Right ventricle myocardium inferior (tissue), 1 donor: ENCODE measurements at regions of chr2 and their contacts with region 1.

Region 1: GRCh38 chr2:197191177-197191939 is 119.2 kb downstream of the ANKRD44 start:
- DNase-seq: no peak
- ATAC-seq: no peak

Region 2: DNA sequence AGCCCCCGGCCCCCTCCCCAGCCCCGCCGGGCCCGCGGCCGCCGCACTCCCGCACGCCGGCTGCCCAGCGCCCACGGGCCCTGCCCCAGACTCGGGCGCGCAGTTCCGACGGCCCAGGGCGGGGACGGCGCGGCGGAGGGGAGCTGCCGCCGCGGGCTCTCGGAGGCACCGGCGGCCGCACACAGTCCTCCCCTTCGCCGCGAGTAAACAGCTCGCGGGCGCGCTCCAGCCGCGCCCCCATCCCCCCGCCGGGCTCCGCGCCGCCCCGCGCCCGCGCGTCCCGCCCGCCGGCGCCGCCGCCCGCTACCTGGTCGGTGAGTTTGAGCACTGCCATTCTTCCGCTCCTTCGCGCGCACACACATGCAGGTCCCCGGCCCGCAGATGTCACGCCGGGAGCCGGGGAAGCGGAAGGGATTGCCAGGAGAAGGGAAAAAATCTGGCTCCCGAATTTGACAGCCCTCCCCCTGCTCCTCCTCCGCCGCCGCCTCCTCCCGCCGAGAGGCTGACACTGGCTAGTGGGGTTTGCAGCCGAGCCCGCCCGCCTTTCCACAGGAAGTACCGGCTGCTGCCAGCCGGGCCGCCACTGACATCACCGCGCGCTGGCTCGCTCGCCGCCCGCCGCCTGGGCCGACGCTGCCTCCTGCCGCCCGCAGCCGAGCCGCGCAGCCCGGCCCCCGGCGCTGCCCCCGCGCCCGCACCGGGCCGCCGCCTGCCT is 119.1 kb after region 1 on chr2 and contains the start of gene ANKRD44:
- intact Hi-C with region 1: loop called (anchors 1 kb)
- DNase-seq: peak; percentile 97
- ATAC-seq: peak; percentile 98
- total RNA-seq, gene ANKRD44: 10.5 TPM

Region 3: DNA sequence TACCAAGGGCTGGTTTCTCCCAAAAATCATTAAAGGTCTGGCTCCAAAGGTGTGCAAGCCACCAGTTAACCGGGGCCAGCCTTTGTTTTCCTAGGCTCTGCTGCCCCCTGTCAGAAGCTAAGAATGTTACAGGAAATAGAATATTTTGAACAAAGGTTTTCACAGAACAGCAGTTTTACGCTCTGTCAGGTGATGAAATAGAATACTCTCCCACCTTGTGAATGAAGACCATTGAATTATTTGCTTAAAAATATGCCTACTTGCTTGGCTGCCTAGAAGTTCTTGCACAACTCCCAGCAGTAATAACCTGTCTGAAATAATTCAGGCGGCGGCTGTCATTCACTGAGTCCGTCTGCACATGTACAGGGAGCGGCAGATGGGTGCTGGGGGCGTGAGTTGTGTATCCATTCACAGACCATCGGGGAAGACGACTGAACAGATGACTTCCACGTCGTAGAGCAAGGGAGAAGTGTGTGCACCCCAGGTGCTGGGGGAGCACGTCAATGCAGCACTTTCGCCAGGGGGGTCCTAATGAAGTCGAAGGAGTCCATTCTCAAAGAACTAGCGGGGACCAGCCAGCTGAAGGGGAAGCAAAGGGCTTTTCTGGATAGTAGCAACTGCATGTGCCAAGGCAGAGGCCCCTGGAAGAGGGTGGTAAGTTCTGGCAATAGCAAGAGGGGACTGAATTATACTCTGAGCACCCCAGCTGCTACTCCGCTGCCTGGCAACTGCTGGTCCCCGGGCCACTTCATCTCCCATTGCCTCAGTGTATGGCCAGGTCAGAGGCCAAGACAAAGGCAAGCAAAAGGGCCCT is 187.3 kb after region 1 on chr2:
- intact Hi-C with region 1: loop called (anchors 1 kb)
- DNase-seq: no peak
- ATAC-seq: peak; percentile 48